Posterior cingulate gyrus (tissue), 11 donors: ENCODE measurements at regions of chr19 and their contacts with region 1.

Region 1: DNA sequence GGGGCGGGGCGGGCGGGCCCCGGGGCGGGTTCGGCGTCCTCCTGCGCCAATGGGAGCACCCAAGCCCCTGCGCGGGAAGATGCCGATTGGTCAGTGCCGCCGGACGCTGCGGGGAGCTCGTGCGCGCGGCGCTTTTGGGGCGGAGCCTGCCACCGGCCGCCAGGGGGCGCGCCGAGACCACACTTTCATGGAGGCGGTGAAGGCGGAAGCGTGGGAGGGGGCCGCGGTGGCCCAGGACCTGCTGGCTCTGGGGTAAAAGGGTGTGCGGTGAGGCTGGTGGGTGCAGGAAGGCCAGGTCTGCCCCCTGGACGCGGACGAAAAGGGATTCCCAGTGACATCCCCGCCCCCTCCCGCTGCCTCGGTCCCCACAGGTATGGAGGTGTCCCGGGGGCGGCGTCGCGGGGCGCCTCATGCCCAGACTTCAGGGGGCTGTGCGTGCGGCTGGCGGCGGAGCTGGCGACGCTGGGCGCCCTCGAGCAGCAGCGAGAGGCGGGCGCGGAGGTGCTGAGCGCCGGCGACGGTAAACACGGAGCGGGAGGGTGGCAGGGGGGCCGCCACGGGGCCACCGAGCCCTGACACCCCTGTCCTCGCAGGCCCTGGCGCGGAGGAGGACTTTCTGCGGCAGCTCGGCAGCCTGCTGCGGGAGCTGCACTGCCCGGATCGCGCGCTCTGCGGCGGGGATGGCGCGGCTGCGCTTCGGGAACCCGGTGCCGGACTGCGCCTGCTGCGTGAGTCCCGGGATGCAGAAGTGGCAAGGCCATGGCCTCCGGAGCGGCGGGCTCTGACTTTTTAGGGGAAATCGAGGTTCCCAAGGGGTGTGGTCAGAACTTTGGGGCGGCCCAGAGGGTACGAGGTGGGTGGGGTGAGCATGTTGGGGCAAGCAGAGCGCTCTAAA is at the start of gene FAM98C:
- DNase-seq: peak; percentile 92 to 99 (median 96)

Region 2: DNA sequence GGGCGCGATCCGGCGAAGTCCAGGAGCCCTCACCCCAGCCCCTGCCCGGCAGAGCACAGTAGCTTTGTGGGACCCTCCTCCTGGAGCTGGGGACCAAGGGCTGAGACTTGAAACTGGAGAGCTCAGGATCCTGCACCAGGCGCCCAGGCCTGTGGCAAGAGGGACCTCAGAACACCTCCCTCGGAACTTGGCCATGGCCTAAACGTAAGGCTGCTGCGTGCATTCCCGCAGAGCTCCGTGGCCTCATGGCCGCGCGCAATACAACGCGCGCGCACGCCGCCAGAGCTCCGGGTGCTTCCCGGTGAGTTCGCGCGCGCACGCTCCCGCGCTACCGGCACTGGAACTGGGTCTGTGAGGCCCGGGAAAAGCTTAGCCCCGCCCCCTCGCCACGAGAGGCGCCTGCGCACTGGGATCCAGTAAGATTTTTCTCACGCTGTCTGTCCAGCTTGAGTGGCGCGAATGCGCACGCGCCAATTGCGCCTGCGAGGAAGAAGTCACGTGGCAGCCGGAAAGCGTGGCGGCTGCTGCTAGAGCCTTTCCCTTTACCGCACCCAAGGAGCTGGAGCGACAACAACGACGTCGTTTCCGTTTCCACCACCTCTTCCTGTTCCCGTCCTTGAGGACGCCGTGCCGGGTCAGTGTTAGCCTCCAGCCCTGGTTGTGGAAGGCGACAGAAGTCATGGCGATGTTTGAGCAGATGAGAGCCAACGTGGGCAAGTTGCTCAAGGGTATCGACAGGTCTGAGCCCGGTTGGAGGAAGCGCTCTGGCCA is 215.6 kb after region 1 on chr19 and contains the start of gene EIF3K:
- intact Hi-C with region 1: loop called (anchors 5 kb)
- DNase-seq: peak; percentile 96 to 100 (median 98)